PC-3 (cell line): ENCODE measurements at regions of chr2 and their contacts with region 1.

Region 1: GRCh38 chr2:42196403-42197267 is 27.5 kb downstream of the EML4 start:
- DNase-seq: peak; percentile 74
- ATAC-seq: peak; percentile 55
- H3K4me3 ChIP-seq: no peak overlapping the region
- H3K27ac ChIP-seq: no peak overlapping the region
- H3K4me1 ChIP-seq: peaks cover 40% of the 10 kb centered on the region
- H3K27me3 ChIP-seq: no peaks in the 10 kb centered on the region
- CTCF ChIP-seq: peak; percentile 82

Region 2: DNA sequence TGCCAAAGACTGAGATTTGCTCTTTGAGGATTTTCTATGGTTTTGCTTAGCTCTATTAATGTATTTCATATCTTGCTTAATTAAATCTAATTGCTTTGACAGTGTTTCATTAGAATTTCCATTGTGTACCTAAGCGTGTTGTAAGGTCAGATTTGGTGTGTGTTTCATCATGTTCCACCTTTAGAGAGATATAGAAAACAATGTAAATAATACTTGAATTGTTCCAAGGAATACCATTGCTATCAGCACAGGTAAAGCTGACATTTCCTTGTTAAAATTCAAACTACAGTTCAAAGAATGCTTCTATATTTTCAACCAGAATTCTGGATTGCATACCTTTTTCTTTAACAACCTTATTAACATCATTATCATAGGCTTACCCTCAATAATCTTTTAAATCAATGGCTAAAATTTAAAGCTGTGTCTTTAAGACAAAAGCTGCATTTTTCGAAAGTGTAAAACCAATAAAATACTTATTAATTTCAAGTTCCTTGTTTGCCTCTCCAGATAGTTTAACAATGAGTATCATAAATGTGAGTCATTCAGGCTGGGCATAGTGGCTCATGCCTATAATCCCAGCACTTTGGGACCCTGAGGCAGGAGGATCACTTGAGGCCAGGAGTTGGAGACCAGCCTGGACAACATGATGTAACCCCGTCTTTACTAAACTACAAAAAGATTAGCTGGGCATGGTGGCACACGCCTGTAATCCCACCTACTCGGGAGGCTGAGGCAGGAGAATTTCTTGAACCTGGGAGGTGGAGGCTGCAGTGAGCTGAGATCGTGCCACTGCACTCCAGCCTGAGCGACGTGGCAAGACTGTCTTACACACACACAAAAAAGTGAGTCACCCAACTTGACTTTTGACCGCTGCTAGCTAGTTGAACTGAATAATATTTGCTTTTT is 336.8 kb before region 1 on chr2:
- CTCF ChIA-PET with region 1: no interaction called
- POLR2A ChIA-PET with region 1: interaction called, 4 read pairs
- intact Hi-C with region 1: loop called (anchors 5 kb)
- DNase-seq: peak; percentile 84
- ATAC-seq: peak; percentile 93
- H3K4me3 ChIP-seq: peak overlapping the region; percentile 32; the same call in 1 of the 2 replicates
- H3K27ac ChIP-seq: peak overlapping the region; percentile 87
- H3K4me1 ChIP-seq: peaks cover 27% of the 10 kb centered on the region
- H3K27me3 ChIP-seq: no peaks in the 10 kb centered on the region
- CTCF ChIP-seq: no peak

Region 3: GRCh38 chr2:42117923-42118753 is 78.5 kb before region 1 on chr2:
- CTCF ChIA-PET with region 1: no interaction called
- POLR2A ChIA-PET with region 1: no interaction called
- intact Hi-C with region 1: loop called (anchors 2 kb)
- DNase-seq: peak; percentile 95
- ATAC-seq: peak; percentile 99
- H3K4me3 ChIP-seq: no peak overlapping the region
- H3K27ac ChIP-seq: peak overlapping the region; percentile 70
- H3K4me1 ChIP-seq: peaks cover 27% of the 10 kb centered on the region
- H3K27me3 ChIP-seq: no peaks in the 10 kb centered on the region
- CTCF ChIP-seq: no peak

Region 4: GRCh38 chr2:42223855-42224268 is 27.2 kb after region 1 on chr2:
- CTCF ChIA-PET with region 1: no interaction called
- POLR2A ChIA-PET with region 1: no interaction called
- intact Hi-C with region 1: loop called (anchors 1 kb)
- DNase-seq: no peak
- ATAC-seq: no peak
- H3K4me3 ChIP-seq: no peak overlapping the region
- H3K27ac ChIP-seq: no peak overlapping the region
- H3K4me1 ChIP-seq: 0 out of 2 replicates have a peak, but pooled peaks cover 8% of the 10 kb centered on the region
- H3K27me3 ChIP-seq: no peaks in the 10 kb centered on the region
- CTCF ChIP-seq: no peak

Region 5: DNA sequence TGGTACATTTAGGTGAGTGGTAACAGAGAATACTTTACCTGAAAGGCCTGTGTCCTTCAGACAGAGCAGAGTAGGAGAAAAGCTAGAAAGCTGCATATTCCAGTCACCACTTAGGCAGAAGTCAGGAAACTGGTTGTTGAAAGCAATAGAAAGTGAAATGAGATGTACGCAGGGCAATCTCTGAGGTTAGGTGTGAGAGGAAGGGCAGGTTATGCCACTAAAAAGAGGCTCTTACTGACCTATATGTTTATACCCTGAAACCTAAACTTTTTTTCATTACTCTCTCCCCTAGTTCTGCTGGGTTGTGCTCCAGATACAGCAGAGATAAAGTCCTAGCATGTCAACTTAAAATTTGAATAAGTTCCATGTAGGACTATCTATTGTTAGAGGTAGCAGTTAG is 70.9 kb after region 1 on chr2:
- CTCF ChIA-PET with region 1: no interaction called
- POLR2A ChIA-PET with region 1: no interaction called
- intact Hi-C with region 1: no loop called
- DNase-seq: no peak
- ATAC-seq: no peak
- H3K4me3 ChIP-seq: no peak overlapping the region
- H3K27ac ChIP-seq: no peak overlapping the region
- H3K4me1 ChIP-seq: no peaks in the 10 kb centered on the region
- H3K27me3 ChIP-seq: no peaks in the 10 kb centered on the region
- CTCF ChIP-seq: no peak

Region 6: GRCh38 chr2:42328148-42328833 is 131.7 kb after region 1 on chr2:
- CTCF ChIA-PET with region 1: no interaction called
- POLR2A ChIA-PET with region 1: no interaction called
- intact Hi-C with region 1: loop called (anchors 5 kb)
- DNase-seq: peak; percentile 48
- ATAC-seq: peak; percentile 48; the same call in 1 of the 2 replicates
- H3K4me3 ChIP-seq: no peak overlapping the region
- H3K27ac ChIP-seq: no peak overlapping the region
- H3K4me1 ChIP-seq: peaks cover 9% of the 10 kb centered on the region
- H3K27me3 ChIP-seq: no peaks in the 10 kb centered on the region
- CTCF ChIP-seq: peak; percentile 77